Psoas muscle (tissue), 8 donors: ENCODE measurements at regions of chr7 and their contacts with region 1.

Region 1: GRCh38 chr7:131040467-131040932 is 287.2 kb upstream of the MKLN1 start:
- DNase-seq: no peak
- ATAC-seq: peak; percentile 66 to 74 (median 71)
- H3K4me3 ChIP-seq: no peak overlapping the region
- H3K27ac ChIP-seq: peak overlapping the region; percentile 64
- H3K4me1 ChIP-seq: peaks cover 46% of the 10 kb centered on the region
- H3K27me3 ChIP-seq: no peaks in the 10 kb centered on the region
- CTCF ChIP-seq: peak; percentile 93

Region 2: DNA sequence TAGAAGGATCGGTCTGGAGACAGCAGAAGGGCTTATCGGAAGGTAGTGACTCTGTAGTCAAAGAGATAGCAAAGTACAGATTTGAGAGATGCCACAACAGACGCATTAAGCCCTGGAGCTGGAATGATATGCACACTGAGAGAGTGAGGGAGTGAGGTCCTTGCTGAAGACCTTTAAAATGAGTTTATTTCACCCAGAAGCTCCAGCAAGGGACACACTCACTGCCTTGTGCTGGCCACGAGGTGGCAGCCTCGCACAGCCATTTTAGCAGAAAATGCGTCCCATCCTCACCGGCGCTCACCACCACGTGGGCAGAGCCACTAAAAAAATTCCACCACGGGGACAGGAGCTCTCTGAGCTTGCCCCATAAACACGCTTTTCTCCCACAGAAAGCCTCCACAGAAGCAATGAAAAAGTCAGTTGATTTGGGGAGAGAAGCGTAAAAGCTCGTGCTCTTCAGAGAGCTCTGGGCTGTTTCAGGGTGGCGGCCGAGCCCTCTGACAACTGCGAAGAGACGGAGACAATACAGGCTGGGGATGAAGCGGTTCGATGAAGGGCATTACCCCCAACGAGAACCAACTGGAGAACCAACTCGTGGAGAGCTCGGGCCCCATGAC is 143.5 kb before region 1 on chr7:
- intact Hi-C with region 1: loop called (anchors 2 to 5 kb)
- DNase-seq: peak; percentile 81 to 89
- ATAC-seq: peak; percentile 31 to 58 (median 44)
- H3K4me3 ChIP-seq: peak overlapping the region; percentile 0
- H3K27ac ChIP-seq: peak overlapping the region; percentile 94
- H3K4me1 ChIP-seq: peaks cover 89% of the 10 kb centered on the region
- H3K27me3 ChIP-seq: no peaks in the 10 kb centered on the region
- CTCF ChIP-seq: peak; percentile 77

Region 3: DNA sequence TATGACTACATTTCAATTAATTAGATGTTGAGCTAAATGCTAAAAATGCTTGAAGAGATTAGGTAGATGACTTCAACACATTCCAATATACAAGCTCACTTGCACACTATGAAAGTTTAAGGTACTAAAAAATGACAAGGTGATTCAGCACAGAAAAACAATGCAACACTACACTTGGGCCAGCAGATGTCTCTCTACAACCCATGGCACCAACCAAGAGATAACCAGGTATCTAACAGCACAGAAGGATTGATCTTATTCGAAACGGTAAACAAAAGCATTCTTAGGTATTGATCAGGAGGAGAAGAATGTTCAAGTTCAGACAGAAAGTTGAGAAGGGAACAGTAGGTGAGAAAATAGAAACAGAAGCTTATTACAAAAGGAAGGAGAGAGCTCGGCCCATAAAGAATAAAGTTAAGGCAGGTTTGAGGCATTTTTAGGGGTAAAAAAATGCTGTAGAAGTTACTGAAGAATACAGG is 58.3 kb before region 1 on chr7:
- intact Hi-C with region 1: loop called in 1 of 2 experiments (anchors 5 kb)
- DNase-seq: no peak
- ATAC-seq: peak; percentile 48 to 77 (median 72)
- H3K4me3 ChIP-seq: no peak overlapping the region
- H3K27ac ChIP-seq: peak overlapping the region; percentile 32
- H3K4me1 ChIP-seq: peaks cover 54% of the 10 kb centered on the region
- H3K27me3 ChIP-seq: no peaks in the 10 kb centered on the region
- CTCF ChIP-seq: peak; percentile 54

Region 4: DNA sequence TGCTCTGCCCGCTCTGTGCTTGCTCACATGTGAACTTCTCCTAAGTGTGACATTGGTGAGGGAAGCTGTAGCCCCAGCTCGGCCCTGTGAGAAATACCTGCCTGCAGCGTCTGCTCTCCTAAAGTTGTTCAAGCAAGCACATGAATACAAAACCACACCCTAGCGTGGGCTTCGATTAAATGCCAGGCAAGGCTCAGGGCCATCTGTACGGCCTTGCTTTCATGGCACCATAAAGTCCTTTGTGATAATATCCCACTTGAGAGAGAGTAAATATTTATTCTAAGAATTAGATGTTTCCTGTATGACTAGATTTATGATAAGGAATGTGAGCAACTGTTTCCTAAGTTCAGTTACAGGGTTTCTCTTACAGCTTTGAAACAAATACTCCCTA is 43.7 kb before region 1 on chr7:
- intact Hi-C with region 1: loop called in 1 of 2 experiments (anchors 5 kb)
- DNase-seq: no peak
- ATAC-seq: peak in 3 of 4 donors; percentile 37 to 51 (median 40)
- H3K4me3 ChIP-seq: no peak overlapping the region
- H3K27ac ChIP-seq: peak overlapping the region; percentile 53
- H3K4me1 ChIP-seq: peaks cover 76% of the 10 kb centered on the region
- H3K27me3 ChIP-seq: no peaks in the 10 kb centered on the region
- CTCF ChIP-seq: no peak

Region 5: GRCh38 chr7:131664570-131664969 is 624.1 kb after region 1 on chr7:
- intact Hi-C with region 1: no loop called
- DNase-seq: no peak
- ATAC-seq: no peak
- H3K4me3 ChIP-seq: no peak overlapping the region
- H3K27ac ChIP-seq: no peak overlapping the region
- H3K4me1 ChIP-seq: no peaks in the 10 kb centered on the region
- H3K27me3 ChIP-seq: no peaks in the 10 kb centered on the region
- CTCF ChIP-seq: no peak